HepG2 (cell line): ENCODE measurements at regions of chr12 and their contacts with region 1.

Region 1: GRCh38 chr12:100827901-100828520 is 33.4 kb downstream of the ANO4 start:
- DNase-seq: peak; percentile 13
- ATAC-seq: peak; percentile 76
- H3K4me3 ChIP-seq: no peak overlapping the region
- H3K27ac ChIP-seq: no peak overlapping the region
- H3K4me1 ChIP-seq: no peaks in the 10 kb centered on the region
- H3K27me3 ChIP-seq: no peaks in the 10 kb centered on the region
- CTCF ChIP-seq: peak; percentile 64
- EP300 ChIP-seq: no peak
- POLR2A ChIP-seq: no peak
- RAD21 ChIP-seq: no peak

Region 2: DNA sequence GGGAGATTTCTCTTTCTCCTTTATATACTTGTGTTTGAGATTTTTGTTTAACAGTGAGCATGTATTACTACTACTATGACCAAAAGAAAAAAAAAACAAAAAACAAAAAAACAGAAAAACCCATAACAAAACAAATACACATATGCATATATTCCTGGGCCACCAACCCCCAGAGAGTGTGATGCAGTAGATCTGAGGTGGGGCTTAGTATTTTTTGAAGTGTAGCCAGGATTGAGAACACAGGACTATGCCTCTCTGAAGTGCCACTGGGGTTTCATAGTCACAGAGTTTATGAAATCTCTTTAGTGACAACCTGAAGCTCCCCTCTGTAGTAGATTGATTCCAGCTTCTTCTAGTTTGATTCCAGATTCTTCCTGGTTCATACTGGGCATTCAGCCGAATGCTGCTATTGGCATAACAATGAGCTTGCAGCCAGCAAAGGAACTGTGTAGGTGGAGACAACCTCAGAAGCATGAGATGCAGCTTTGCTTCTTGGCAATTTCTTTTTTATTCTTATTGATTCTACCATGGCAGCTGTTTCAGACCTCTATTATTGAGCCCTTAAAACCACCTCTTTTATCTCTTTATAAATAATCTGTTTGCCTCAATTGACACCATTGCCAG is 48.9 kb before region 1 on chr12:
- CTCF ChIA-PET with region 1: no interaction called
- POLR2A ChIA-PET with region 1: no interaction called
- in situ Hi-C with region 1: no loop called
- intact Hi-C with region 1: no loop called
- DNase-seq: no peak
- ATAC-seq: no peak
- H3K4me3 ChIP-seq: no peak overlapping the region
- H3K27ac ChIP-seq: no peak overlapping the region
- H3K4me1 ChIP-seq: no peaks in the 10 kb centered on the region
- H3K27me3 ChIP-seq: peaks cover 0 to 6% of the 10 kb centered on the region in 2 experiments; a peak in 1 of 5 replicates
- CTCF ChIP-seq: no peak
- EP300 ChIP-seq: no peak
- POLR2A ChIP-seq: no peak
- RAD21 ChIP-seq: no peak

Region 3: DNA sequence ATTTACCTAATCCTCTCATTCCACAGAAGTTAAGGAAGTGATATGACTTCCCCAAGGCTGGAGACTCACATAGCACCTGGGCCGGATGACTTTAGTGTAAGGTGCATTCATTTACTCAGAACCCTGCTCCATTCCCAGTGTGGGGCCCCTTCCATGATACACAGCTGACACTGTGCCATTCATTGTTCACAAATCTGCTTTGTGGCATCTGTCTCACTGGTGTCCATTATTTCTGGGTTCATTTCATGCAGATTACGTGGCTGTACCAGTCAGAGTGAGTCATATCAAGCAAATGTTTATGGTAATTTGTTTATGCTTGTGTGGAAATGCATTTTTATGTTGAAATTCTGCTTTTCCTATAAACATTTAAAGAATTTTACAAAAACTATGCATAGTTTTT is 28.2 kb before region 1 on chr12:
- CTCF ChIA-PET with region 1: no interaction called
- POLR2A ChIA-PET with region 1: no interaction called
- in situ Hi-C with region 1: no loop called
- intact Hi-C with region 1: no loop called
- DNase-seq: no peak
- ATAC-seq: no peak
- H3K4me3 ChIP-seq: no peak overlapping the region
- H3K27ac ChIP-seq: no peak overlapping the region
- H3K4me1 ChIP-seq: no peaks in the 10 kb centered on the region
- H3K27me3 ChIP-seq: peaks cover 1 to 7% of the 10 kb centered on the region in 2 experiments; a peak in 1 of 5 replicates
- CTCF ChIP-seq: no peak
- EP300 ChIP-seq: no peak
- POLR2A ChIP-seq: no peak
- RAD21 ChIP-seq: no peak

Region 4: DNA sequence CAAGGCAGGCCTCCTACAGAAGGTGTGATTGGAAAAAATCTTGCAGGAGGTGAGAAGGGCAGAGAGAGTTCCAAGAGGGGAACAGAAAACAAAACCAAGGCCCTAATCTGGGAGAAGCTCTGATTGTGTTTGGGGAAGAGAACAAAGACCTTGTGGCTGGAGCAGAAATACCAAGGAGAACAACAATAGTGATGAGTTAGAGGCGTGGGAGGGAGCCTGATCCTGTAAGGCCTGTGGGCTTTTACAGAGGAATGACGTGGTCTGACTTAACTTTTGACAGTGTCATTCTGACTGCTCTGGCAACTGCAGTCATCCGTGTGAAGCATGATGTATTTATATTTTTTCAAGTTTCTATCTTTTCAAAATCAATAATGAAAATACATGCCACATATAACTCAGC is 167.2 kb after region 1 on chr12:
- CTCF ChIA-PET with region 1: no interaction called
- POLR2A ChIA-PET with region 1: no interaction called
- in situ Hi-C with region 1: no loop called
- intact Hi-C with region 1: loop called (anchors 10 kb)
- DNase-seq: no peak
- ATAC-seq: no peak
- H3K4me3 ChIP-seq: no peak overlapping the region
- H3K27ac ChIP-seq: no peak overlapping the region
- H3K4me1 ChIP-seq: no peaks in the 10 kb centered on the region
- H3K27me3 ChIP-seq: no peaks in the 10 kb centered on the region
- CTCF ChIP-seq: no peak
- EP300 ChIP-seq: no peak
- POLR2A ChIP-seq: no peak
- RAD21 ChIP-seq: no peak

Region 5: GRCh38 chr12:101323255-101323654 is 495.2 kb after region 1 on chr12:
- CTCF ChIA-PET with region 1: interaction called, 13 read pairs
- POLR2A ChIA-PET with region 1: no interaction called
- in situ Hi-C with region 1: loop called (anchors 10 kb)
- intact Hi-C with region 1: no loop called
- DNase-seq: no peak
- ATAC-seq: no peak
- H3K4me3 ChIP-seq: no peak overlapping the region
- H3K27ac ChIP-seq: no peak overlapping the region
- H3K4me1 ChIP-seq: no peaks in the 10 kb centered on the region
- H3K27me3 ChIP-seq: no peaks in the 10 kb centered on the region
- CTCF ChIP-seq: no peak
- EP300 ChIP-seq: no peak
- POLR2A ChIP-seq: no peak
- RAD21 ChIP-seq: no peak